ENCODE measurements at regions of chr6 and their contacts with region 1.

Region 1: DNA sequence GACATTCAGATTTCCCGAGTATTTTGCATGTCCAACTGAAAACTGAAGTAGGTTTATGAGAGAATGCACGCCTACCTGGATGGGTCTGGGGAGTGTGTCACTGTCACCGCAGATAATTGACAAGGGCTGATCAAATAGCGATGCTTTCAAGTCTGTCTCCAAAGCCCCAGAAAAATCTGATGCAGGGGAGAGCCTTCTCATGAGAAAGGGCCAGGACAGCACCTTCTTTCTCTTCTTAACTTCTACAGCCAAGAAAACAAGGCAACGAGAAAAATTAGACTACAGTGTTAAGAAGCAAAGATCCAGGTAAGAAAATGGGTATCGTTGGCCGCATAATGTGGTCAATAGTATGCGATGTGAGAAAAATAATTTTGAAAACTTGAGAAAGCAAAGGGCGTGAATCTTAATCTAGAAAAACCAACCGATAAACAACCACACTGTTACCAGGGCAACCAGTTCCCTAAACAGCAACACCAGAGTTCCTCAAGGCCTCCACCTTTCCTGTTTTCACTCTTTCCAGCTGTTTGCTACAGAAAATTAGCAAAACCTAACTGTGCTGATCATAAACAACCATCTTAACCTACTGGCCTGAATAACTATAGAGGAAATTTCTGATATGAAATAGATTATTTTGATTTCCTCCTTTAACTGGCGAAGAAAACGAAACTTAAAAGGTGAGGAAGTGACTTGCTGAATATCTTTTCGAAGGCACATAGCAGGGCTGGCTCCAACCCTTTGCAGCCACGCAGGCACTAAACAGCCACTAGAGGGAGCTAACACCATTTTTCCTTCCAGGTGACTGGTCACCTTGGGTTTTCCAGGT is 2.6 kb downstream of the TAGAP start:
- DNase-seq: peak; percentile 88
- H3K4me3 ChIP-seq: peak overlapping the region; percentile 41 to 79 (median 52)
- H3K27ac ChIP-seq: peak overlapping the region; percentile 75 to 94 (median 92)
- H3K4me1 ChIP-seq: peaks cover 45 to 91% (median 68%) of the 10 kb centered on the region in 6 donors
- H3K27me3 ChIP-seq: no peaks in the 10 kb centered on the region
- CTCF ChIP-seq: peak; percentile 96 to 100 (median 98)
- POLR2A ChIP-seq: no peak

Region 2: DNA sequence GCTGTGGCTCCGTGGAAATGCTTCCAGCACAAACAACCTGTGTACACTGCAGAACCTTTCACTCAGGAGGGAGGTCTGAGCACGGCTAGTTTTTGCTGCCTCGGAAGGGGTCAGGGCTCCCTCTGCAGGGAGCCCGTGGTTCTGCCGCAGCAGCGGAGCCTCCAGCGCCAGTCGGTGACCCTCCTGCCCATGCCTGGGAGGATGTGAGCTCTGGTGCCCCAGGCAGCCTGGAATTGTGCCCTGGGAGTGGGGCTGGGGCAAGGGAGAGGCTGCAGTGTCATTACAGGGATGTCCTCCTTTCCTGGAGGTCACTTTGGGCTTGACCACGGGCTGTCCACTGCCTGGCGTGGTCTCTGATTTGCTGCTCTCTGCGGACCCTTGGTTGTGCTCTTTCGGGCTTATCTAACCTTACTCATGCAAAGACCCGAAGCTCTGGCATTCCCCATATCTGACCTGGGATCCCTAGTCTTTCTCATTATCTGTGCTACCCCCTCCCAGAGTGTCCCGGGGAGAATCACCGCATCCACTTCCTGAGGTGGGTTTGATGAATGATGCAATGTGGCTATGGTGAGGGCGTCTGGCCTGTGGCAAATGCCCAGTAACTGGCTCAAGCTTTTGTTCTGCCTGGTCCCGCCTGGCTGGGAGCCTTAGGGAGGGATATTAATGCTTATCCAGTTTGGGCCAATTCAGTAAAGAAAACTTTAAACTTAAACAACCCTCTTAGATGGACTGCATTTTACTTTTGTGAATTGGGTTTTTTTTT is 62.1 kb after region 1 on chr6:
- intact Hi-C with region 1: loop called (anchors 5 kb)
- DNase-seq: peak; percentile 95
- H3K4me3 ChIP-seq: peak overlapping the region in 1 of 8 donors; percentile 11
- H3K27ac ChIP-seq: peak overlapping the region; percentile 61 to 93 (median 86)
- H3K4me1 ChIP-seq: peaks cover 29 to 89% (median 55%) of the 10 kb centered on the region in 6 donors
- H3K27me3 ChIP-seq: no peaks in the 10 kb centered on the region
- CTCF ChIP-seq: peak; percentile 89 to 98 (median 96)
- POLR2A ChIP-seq: no peak

Measured in spleen (tissue), 13 donors.